B cell (primary cell): ENCODE measurements at regions of chr1 and their contacts with region 1.

Region 1: GRCh38 chr1:52636721-52637695 is 4.0 kb downstream of the SHISAL2A start:
- DNase-seq: peak; percentile 95
- ATAC-seq: peak; percentile 69
- H3K4me3 ChIP-seq: peak overlapping the region; percentile 25 to 50 (median 39)
- H3K4me3 Mint-ChIP-seq: peak overlapping the region; percentile 91
- H3K27ac ChIP-seq: peak overlapping the region; percentile 86 to 99
- H3K27ac Mint-ChIP-seq: peak overlapping the region; percentile 100
- H3K4me1 ChIP-seq: peaks cover 85 to 92% of the 10 kb centered on the region in 2 donors
- H3K4me1 Mint-ChIP-seq: peaks cover 79% of the 10 kb centered on the region
- H3K27me3 ChIP-seq: no peaks in the 10 kb centered on the region
- H3K27me3 Mint-ChIP-seq: no peaks in the 10 kb centered on the region
- CTCF ChIP-seq: no peak

Region 2: GRCh38 chr1:52404116-52404986 is 232.7 kb before region 1 on chr1 and contains the starts of genes ORC1 and PRPF38A:
- CTCF ChIA-PET with region 1: interaction called, 3 read pairs
- POLR2A ChIA-PET with region 1: no interaction called
- intact Hi-C with region 1: loop called (anchors 1 kb)
- DNase-seq: peak; percentile 98
- ATAC-seq: peak; percentile 98
- H3K4me3 ChIP-seq: peak within 1 kb of the TSS; percentile 76 to 99 (median 95)
- H3K4me3 Mint-ChIP-seq: peak within 1 kb of the TSS; percentile 100
- H3K27ac ChIP-seq: peak within 1 kb of the TSS; percentile 91 to 95
- H3K27ac Mint-ChIP-seq: peak within 1 kb of the TSS; percentile 96
- H3K4me1 ChIP-seq: peaks cover 15 to 22% of the 10 kb centered on the region in 2 donors
- H3K4me1 Mint-ChIP-seq: peaks cover 32% of the 10 kb centered on the region
- H3K27me3 ChIP-seq: no peaks in the 10 kb centered on the region
- H3K27me3 Mint-ChIP-seq: no peaks in the 10 kb centered on the region
- CTCF ChIP-seq: peak; percentile 60
- total RNA-seq, gene ORC1: 1.3 TPM in 2 replicates
- total RNA-seq, gene PRPF38A: 68.1 and 69.8 TPM in 2 replicates

Region 3: GRCh38 chr1:52534928-52535764 is 101.9 kb before region 1 on chr1:
- CTCF ChIA-PET with region 1: no interaction called
- POLR2A ChIA-PET with region 1: interaction called, 3 read pairs
- intact Hi-C with region 1: loop called (anchors 5 kb)
- DNase-seq: no peak
- ATAC-seq: no peak
- H3K4me3 ChIP-seq: no peak overlapping the region
- H3K4me3 Mint-ChIP-seq: no peak overlapping the region
- H3K27ac ChIP-seq: peak overlapping the region in 1 of 2 donors; percentile 16
- H3K27ac Mint-ChIP-seq: no peak overlapping the region
- H3K4me1 ChIP-seq: peaks cover 31 to 36% of the 10 kb centered on the region in 2 donors
- H3K4me1 Mint-ChIP-seq: peaks cover 63% of the 10 kb centered on the region
- H3K27me3 ChIP-seq: no peaks in the 10 kb centered on the region
- H3K27me3 Mint-ChIP-seq: no peaks in the 10 kb centered on the region
- CTCF ChIP-seq: no peak

Region 4: DNA sequence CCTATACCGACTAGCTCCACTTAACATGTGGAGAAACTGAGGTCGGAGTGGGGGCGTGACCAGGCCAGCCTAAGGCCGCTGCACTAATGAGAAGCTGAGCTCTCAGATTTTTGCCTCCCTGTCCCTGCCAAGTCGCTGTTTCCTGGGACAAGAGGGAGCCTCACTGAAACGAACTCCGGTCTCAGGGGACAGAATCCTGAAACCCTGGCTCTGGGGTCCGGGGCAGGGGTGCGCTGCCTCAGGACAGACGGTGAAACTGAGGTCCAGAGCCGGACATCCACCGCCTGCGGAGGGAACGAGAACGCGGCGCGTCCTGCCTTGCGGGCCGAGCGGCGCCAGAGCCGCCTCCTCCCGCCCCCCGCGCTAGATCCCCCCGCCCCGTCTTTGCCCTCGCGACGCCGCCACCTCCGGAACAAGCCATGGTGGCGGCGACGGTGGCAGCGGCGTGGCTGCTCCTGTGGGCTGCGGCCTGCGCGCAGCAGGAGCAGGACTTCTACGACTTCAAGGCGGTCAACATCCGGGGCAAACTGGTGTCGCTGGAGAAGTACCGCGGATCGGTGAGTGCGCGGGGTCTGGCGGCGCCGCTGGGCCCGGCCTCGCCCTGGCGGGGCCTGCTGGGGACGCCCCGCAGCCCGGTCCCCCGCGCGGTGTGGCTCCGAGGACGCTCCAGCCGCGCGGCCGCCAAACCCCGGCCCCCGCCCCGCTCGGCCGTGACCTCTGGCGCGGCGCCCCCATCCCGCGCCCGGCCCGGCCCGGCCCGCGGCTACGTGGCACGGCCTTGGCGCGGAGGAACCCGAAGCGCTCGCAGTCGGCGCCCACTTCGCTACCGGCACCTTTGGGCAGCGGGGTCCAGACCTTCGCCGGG is 34.8 kb before region 1 on chr1 and contains the start of gene GPX7:
- CTCF ChIA-PET with region 1: interaction called, 7 read pairs
- POLR2A ChIA-PET with region 1: interaction called, 8 read pairs
- intact Hi-C with region 1: loop called (anchors 1 kb)
- DNase-seq: peak; percentile 74
- ATAC-seq: peak; percentile 72
- H3K4me3 ChIP-seq: peak within 1 kb of the TSS; percentile 60 to 70 (median 65)
- H3K4me3 Mint-ChIP-seq: peak within 1 kb of the TSS; percentile 93
- H3K27ac ChIP-seq: peak within 1 kb of the TSS; percentile 42 to 76
- H3K27ac Mint-ChIP-seq: peak within 1 kb of the TSS; percentile 93
- H3K4me1 ChIP-seq: peaks cover 34 to 46% of the 10 kb centered on the region in 2 donors
- H3K4me1 Mint-ChIP-seq: peaks cover 50% of the 10 kb centered on the region
- H3K27me3 ChIP-seq: no peaks in the 10 kb centered on the region
- H3K27me3 Mint-ChIP-seq: no peaks in the 10 kb centered on the region
- CTCF ChIP-seq: no peak
- total RNA-seq, gene GPX7: 21.4 and 23.9 TPM in 2 replicates

Region 5: DNA sequence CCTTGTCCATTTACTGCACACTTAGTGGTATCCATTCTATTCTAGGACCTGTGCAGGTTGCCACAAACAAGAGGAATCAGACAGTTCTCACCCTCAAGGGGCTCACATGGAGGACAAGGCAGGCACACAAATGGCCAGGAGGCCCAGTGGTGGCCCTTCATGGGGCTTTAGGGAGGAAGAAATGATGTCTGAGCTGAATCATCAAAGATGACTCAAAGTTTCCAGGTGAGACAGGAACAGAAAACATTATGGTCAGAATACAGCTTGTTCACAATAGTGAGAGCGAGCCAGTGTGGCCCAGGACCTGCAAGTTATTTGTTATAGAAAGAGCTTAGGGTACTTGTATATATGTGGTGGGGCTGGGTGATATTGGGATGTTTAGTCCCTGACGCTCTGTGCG is 22.3 kb after region 1 on chr1:
- CTCF ChIA-PET with region 1: interaction called, 42 read pairs
- POLR2A ChIA-PET with region 1: interaction called, 9 read pairs
- intact Hi-C with region 1: loop called (anchors 1 kb)
- DNase-seq: no peak
- ATAC-seq: peak; percentile 60
- H3K4me3 ChIP-seq: no peak overlapping the region
- H3K4me3 Mint-ChIP-seq: peak overlapping the region; percentile 46
- H3K27ac ChIP-seq: peak overlapping the region in 1 of 2 donors; percentile 21
- H3K27ac Mint-ChIP-seq: peak overlapping the region; percentile 86
- H3K4me1 ChIP-seq: no peaks in the 10 kb centered on the region
- H3K4me1 Mint-ChIP-seq: peaks cover 28% of the 10 kb centered on the region
- H3K27me3 ChIP-seq: no peaks in the 10 kb centered on the region
- H3K27me3 Mint-ChIP-seq: no peaks in the 10 kb centered on the region
- CTCF ChIP-seq: no peak

Region 6: GRCh38 chr1:52665006-52665941 is 28.3 kb after region 1 on chr1:
- CTCF ChIA-PET with region 1: interaction called, 42 read pairs
- POLR2A ChIA-PET with region 1: interaction called, 9 read pairs
- intact Hi-C with region 1: no loop called
- DNase-seq: no peak
- ATAC-seq: no peak
- H3K4me3 ChIP-seq: no peak overlapping the region
- H3K4me3 Mint-ChIP-seq: no peak overlapping the region
- H3K27ac ChIP-seq: peak overlapping the region in 1 of 2 donors; percentile 28
- H3K27ac Mint-ChIP-seq: peak overlapping the region; percentile 74
- H3K4me1 ChIP-seq: peaks cover 4 to 8% of the 10 kb centered on the region in 2 donors
- H3K4me1 Mint-ChIP-seq: peaks cover 21% of the 10 kb centered on the region
- H3K27me3 ChIP-seq: no peaks in the 10 kb centered on the region
- H3K27me3 Mint-ChIP-seq: no peaks in the 10 kb centered on the region
- CTCF ChIP-seq: no peak

Region 7: GRCh38 chr1:52676249-52676903 is 39.4 kb after region 1 on chr1:
- CTCF ChIA-PET with region 1: no interaction called
- POLR2A ChIA-PET with region 1: no interaction called
- intact Hi-C with region 1: no loop called
- DNase-seq: no peak
- ATAC-seq: no peak
- H3K4me3 ChIP-seq: no peak overlapping the region
- H3K4me3 Mint-ChIP-seq: no peak overlapping the region
- H3K27ac ChIP-seq: no peak overlapping the region
- H3K27ac Mint-ChIP-seq: no peak overlapping the region
- H3K4me1 ChIP-seq: no peaks in the 10 kb centered on the region
- H3K4me1 Mint-ChIP-seq: peaks cover 6% of the 10 kb centered on the region
- H3K27me3 ChIP-seq: no peaks in the 10 kb centered on the region
- H3K27me3 Mint-ChIP-seq: no peaks in the 10 kb centered on the region
- CTCF ChIP-seq: no peak

Region 8: DNA sequence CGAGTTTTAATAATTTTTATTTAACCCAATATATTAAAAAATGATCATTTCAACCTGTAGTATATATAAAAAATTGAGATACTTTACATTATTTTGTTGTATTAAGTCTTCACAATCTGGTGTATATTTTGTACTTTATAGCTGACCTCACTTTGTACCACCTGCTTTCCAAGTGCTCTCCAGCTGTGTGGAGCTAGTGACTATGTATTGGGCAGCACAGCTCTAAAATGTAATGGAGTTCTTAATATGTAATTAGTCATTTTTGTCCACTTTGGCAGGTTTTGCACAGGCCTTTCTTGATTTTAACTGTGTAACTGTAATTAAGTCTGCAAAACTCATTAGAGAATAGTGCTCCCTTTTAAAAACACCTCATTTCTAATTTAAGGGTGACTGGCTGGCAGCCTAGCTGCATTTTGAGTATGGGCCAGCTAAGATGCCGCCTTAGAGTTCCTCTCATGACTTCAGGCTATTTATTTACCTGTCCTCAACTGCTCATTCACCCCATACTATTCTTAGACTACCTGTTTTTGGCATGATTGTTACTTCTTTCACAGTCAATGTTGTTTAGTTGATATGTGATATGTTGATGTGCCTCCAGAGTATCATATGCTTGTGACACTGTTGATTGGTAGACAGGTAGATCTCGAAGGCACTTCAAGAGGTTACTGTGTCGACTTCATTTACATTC is 132.5 kb after region 1 on chr1:
- CTCF ChIA-PET with region 1: no interaction called
- POLR2A ChIA-PET with region 1: interaction called, 10 read pairs
- intact Hi-C with region 1: no loop called
- DNase-seq: no peak
- ATAC-seq: no peak
- H3K4me3 ChIP-seq: no peak overlapping the region
- H3K4me3 Mint-ChIP-seq: no peak overlapping the region
- H3K27ac ChIP-seq: no peak overlapping the region
- H3K27ac Mint-ChIP-seq: no peak overlapping the region
- H3K4me1 ChIP-seq: no peaks in the 10 kb centered on the region
- H3K4me1 Mint-ChIP-seq: peaks cover 9% of the 10 kb centered on the region
- H3K27me3 ChIP-seq: no peaks in the 10 kb centered on the region
- H3K27me3 Mint-ChIP-seq: no peaks in the 10 kb centered on the region
- CTCF ChIP-seq: no peak

Region 9: GRCh38 chr1:52798331-52798730 is 161.3 kb after region 1 on chr1:
- CTCF ChIA-PET with region 1: no interaction called
- POLR2A ChIA-PET with region 1: no interaction called
- intact Hi-C with region 1: no loop called
- DNase-seq: no peak
- ATAC-seq: no peak
- H3K4me3 ChIP-seq: no peak overlapping the region
- H3K4me3 Mint-ChIP-seq: no peak overlapping the region
- H3K27ac ChIP-seq: no peak overlapping the region
- H3K27ac Mint-ChIP-seq: no peak overlapping the region
- H3K4me1 ChIP-seq: no peaks in the 10 kb centered on the region
- H3K4me1 Mint-ChIP-seq: no peaks in the 10 kb centered on the region
- H3K27me3 ChIP-seq: no peaks in the 10 kb centered on the region
- H3K27me3 Mint-ChIP-seq: no peaks in the 10 kb centered on the region
- CTCF ChIP-seq: no peak